Mammary epithelial cell (primary cell): ENCODE measurements at regions of chr12 and their contacts with region 1.

Region 1: GRCh38 chr12:108950991-108951739 is 69.7 kb downstream of the SVOP start:
- DNase-seq: peak; percentile 68
- H3K4me3 ChIP-seq: peak overlapping the region in 1 of 3 experiments; percentile 26
- H3K27ac ChIP-seq: no peak overlapping the region
- H3K4me1 ChIP-seq: peaks cover 24% of the 10 kb centered on the region
- H3K27me3 ChIP-seq: no peaks in the 10 kb centered on the region
- CTCF ChIP-seq: peak; percentile 81 to 87

Region 2: DNA sequence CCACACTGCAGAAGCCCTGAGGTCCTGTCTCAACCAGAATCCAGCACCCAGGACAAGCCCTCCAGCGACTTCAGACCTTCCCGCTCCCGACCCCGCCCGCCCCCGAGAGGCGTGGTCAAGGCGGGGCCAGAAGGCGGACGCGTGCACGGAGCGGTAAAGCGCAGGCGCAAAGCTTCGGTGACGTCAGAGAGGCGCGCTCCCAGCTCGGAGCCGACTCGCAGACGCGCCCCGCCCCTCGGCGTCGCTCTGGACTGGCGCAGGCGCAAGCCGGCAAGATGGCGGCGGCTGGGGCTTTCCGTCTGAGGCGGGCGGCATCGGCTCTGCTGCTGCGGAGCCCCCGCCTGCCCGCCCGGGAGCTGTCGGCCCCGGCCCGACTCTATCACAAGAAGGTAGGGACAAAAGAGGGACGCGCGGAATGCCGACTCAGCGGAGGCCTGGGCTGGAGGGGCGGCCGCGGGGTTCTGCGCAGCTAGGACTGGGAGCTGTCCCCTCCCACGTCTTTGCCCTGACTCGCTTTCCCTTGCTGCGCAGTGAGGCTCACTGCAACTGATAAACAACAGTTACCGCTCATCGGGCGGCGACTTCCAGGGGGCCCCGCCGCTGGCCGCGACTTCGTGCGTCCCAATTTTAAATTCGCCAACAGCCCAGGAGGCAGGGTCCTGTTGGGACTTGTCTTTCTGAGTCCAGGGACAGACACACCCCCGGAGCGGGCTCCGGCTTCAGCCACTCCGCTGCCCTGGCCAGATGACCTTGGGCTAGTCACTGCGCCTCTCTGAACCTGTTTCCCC is 388.6 kb before region 1 on chr12 and contains the start of gene ISCU:
- CTCF ChIA-PET with region 1: no interaction called
- dilution Hi-C with region 1: no loop called
- in situ Hi-C with region 1: no loop called
- intact Hi-C with region 1: loop called (anchors 1 kb)
- DNase-seq: peak; percentile 96
- H3K4me3 ChIP-seq: peak within 1 kb of the TSS; percentile 88
- H3K27ac ChIP-seq: peak within 1 kb of the TSS; percentile 93
- H3K4me1 ChIP-seq: peaks cover 30% of the 10 kb centered on the region
- H3K27me3 ChIP-seq: no peaks in the 10 kb centered on the region
- CTCF ChIP-seq: no peak
- total RNA-seq, gene ISCU: 55.3 to 77.6 TPM

Region 3: DNA sequence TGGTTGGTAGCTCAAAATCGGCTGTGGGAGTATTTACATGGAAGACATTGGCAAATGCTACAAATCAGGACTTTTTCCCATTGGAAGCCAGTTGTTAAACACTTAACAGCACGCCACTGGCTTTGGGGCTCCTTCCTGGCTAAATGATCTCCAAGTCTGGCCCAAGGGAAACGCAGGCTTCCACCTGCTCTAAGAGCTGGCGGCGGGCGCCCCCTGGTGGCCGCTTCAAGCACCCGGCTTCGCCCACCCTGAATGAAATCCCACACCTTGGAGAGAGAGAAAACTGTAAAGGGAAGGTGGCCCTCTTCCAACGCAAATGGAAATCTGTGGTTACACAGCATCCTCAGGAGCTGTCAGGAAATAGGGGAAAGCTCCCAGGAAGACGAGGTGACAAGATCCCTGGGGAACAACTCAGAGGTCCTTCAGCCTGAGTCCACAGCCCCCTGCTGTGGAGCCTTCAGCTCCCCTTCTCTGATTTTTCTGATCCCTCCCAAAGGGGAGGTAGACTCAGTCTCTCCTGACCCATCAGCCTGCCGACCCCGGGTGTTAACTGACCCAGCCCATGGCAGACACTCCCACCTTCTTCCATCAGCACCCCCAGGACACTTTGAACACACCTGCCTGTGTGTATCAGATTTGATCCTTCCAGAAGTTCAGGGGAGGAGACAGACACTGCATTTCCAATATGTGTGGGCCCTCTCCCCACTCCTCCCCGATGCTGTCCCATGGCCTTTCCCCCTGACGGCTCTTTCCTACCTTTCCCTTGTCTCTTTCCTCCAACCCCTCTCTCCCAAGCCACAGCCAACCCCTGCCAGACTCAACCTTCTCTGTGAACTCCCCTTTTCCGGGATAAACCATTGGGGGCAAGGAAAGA is 332.8 kb before region 1 on chr12:
- CTCF ChIA-PET with region 1: no interaction called
- dilution Hi-C with region 1: no loop called
- in situ Hi-C with region 1: no loop called
- intact Hi-C with region 1: loop called (anchors 2 kb)
- DNase-seq: peak; percentile 57
- H3K4me3 ChIP-seq: no peak overlapping the region
- H3K27ac ChIP-seq: no peak overlapping the region
- H3K4me1 ChIP-seq: peaks cover 6% of the 10 kb centered on the region
- H3K27me3 ChIP-seq: no peaks in the 10 kb centered on the region
- CTCF ChIP-seq: peak; percentile 72 to 97

Region 4: DNA sequence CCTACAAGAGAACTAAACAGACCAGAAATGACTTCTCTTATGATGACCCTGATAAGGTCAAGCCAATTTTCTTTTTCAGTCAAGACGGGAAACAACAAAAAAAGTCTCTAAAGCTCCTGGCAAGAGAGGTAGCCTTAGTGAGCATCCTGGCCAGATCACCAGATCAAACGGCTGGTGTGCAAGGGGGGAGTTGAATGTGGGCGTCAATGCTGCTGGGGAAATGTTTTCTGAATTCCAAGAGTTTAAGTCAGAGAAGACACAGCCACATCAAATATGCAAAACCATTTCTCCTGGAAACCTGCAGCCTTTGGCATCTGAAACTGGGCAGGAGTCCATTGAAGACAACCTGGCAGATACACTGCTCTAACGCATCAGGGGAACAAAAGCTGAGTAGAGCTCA is 301.5 kb before region 1 on chr12:
- CTCF ChIA-PET with region 1: interaction called, 15 read pairs
- dilution Hi-C with region 1: no loop called
- in situ Hi-C with region 1: loop called in 1 of 2 experiments (anchors 25 kb)
- intact Hi-C with region 1: no loop called
- DNase-seq: peak; percentile 75
- H3K4me3 ChIP-seq: no peak overlapping the region
- H3K27ac ChIP-seq: no peak overlapping the region
- H3K4me1 ChIP-seq: peaks cover 14% of the 10 kb centered on the region
- H3K27me3 ChIP-seq: no peaks in the 10 kb centered on the region
- CTCF ChIP-seq: no peak

Region 5: DNA sequence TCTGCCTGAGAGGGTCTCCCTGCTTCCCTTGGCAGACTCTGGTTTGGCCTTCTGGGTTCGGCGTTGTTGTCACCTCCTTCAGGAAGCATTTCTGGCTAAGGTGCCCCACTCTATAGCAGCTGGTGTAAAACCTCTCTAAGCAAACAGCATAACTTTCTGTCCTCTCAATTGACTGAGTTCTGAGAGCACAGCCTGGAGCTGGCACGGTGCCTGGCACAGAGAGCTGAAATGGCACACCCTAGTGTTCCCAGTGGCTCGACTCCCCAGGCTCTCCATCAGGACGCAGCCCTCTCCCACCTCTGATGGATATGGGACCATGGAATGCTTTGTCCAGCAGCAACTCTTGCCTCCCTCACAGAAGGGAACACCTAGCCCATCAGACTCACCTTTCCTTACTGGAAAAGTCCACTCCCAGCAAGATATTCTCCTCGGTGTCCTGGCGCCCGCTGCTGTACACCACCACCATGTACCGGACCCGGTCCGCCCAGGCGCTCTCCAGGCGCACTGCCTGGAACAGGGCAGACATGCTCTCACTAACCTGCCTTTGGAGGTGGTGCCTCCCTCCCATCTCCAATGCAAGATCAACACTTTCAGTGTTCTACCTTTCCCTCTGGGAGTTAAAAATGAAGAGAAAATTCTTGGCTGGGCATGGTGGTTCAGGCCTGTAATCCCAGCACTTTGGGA is 134.4 kb before region 1 on chr12:
- CTCF ChIA-PET with region 1: interaction called, 5 read pairs
- dilution Hi-C with region 1: no loop called
- in situ Hi-C with region 1: no loop called
- intact Hi-C with region 1: loop called (anchors 1 kb)
- DNase-seq: no peak
- H3K4me3 ChIP-seq: no peak overlapping the region
- H3K27ac ChIP-seq: peak overlapping the region; percentile 78
- H3K4me1 ChIP-seq: peaks cover 34% of the 10 kb centered on the region
- H3K27me3 ChIP-seq: no peaks in the 10 kb centered on the region
- CTCF ChIP-seq: no peak

Region 6: GRCh38 chr12:108884116-108885012 is 66.8 kb before region 1 on chr12:
- CTCF ChIA-PET with region 1: interaction called, 3 read pairs
- dilution Hi-C with region 1: loop called (anchors 5 kb)
- in situ Hi-C with region 1: no loop called
- intact Hi-C with region 1: loop called (anchors 1 kb)
- DNase-seq: peak; percentile 14
- H3K4me3 ChIP-seq: no peak overlapping the region
- H3K27ac ChIP-seq: no peak overlapping the region
- H3K4me1 ChIP-seq: peaks cover 2% of the 10 kb centered on the region
- H3K27me3 ChIP-seq: no peaks in the 10 kb centered on the region
- CTCF ChIP-seq: peak; percentile 65 to 72